Psoas muscle (tissue), 8 donors: ENCODE measurements at regions of chr15 and their contacts with region 1.

Region 1: DNA sequence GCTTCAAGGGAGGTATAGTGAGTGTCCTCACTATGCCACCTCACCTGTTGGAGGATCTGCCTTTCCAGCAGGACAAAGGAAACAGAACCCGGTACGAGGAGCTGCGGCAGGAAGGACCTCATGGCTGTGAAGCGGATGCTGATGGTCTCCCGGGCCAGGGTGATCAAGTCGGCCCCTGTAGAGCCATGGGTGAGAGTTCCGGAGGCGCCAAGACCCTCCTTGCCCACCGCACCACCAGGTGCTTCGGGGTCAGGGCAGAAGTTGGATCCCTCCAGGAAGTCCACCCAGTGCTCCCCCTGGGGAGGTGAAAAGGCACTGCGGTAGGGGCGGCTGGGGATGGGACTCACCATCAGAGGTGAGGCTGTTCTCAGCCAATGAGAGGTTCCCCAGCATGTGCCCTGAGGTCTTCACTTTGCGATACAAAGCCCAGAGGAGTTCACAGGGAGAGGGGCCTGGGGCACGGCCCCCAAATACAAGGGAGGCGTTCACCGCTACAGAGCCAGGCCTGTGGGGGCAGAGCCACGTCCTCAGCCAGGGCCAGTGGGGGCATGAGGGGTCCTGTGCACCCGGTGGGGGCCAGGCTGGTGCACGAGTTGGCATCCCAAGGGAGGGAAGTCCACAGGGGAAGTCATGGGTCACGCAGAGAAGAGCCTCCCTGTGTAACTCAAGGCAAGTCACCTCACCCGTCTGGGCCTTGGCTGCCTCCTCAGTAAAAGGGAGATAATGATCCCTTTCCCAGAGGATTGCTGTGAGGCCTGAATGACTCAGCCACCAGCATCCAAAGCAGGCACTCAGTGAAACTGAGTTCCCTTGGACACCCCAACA is 27.7 kb downstream of the C15orf39 start:
- DNase-seq: peak; percentile 11 to 35
- ATAC-seq: no peak
- H3K4me3 ChIP-seq: no peak overlapping the region
- H3K27ac ChIP-seq: no peak overlapping the region
- H3K4me1 ChIP-seq: no peaks in the 10 kb centered on the region
- H3K27me3 ChIP-seq: peaks cover 0 to 6% (median 0%) of the 10 kb centered on the region in 3 donors
- CTCF ChIP-seq: no peak

Region 2: GRCh38 chr15:74889883-74890664 is 339.3 kb before region 1 on chr15 and contains the start of gene MPI:
- intact Hi-C with region 1: no loop called
- DNase-seq: peak; percentile 86 to 91
- ATAC-seq: peak; percentile 94 to 98 (median 95)
- H3K4me3 ChIP-seq: peak within 1 kb of the TSS; percentile 95
- H3K27ac ChIP-seq: peak within 1 kb of the TSS; percentile 90
- H3K4me1 ChIP-seq: peaks cover 18% of the 10 kb centered on the region
- H3K27me3 ChIP-seq: no peaks in the 10 kb centered on the region
- CTCF ChIP-seq: peak; percentile 6
- total RNA-seq, gene MPI: 37.6 to 61.2 (median 43.2) TPM

Region 3: GRCh38 chr15:74928771-74929198 is 300.6 kb before region 1 on chr15:
- intact Hi-C with region 1: no loop called
- DNase-seq: no peak
- ATAC-seq: no peak
- H3K4me3 ChIP-seq: no peak overlapping the region
- H3K27ac ChIP-seq: no peak overlapping the region
- H3K4me1 ChIP-seq: peaks cover 7% of the 10 kb centered on the region
- H3K27me3 ChIP-seq: no peaks in the 10 kb centered on the region
- CTCF ChIP-seq: no peak

Region 4: GRCh38 chr15:75178171-75179075 is 51.0 kb before region 1 on chr15:
- intact Hi-C with region 1: no loop called
- DNase-seq: peak; percentile 44 to 70
- ATAC-seq: peak; percentile 17 to 62 (median 44)
- H3K4me3 ChIP-seq: peak overlapping the region; percentile 62
- H3K27ac ChIP-seq: peak overlapping the region; percentile 5
- H3K4me1 ChIP-seq: peaks cover 12% of the 10 kb centered on the region
- H3K27me3 ChIP-seq: peaks cover 0 to 31% (median 2%) of the 10 kb centered on the region in 3 donors
- CTCF ChIP-seq: no peak

Region 5: GRCh38 chr15:75307778-75308391 is 78.5 kb after region 1 on chr15:
- intact Hi-C with region 1: loop called in 1 of 2 experiments (anchors 10 kb)
- DNase-seq: no peak
- ATAC-seq: peak in 2 of 4 donors; percentile 30 to 42
- H3K4me3 ChIP-seq: no peak overlapping the region
- H3K27ac ChIP-seq: no peak overlapping the region
- H3K4me1 ChIP-seq: no peaks in the 10 kb centered on the region
- H3K27me3 ChIP-seq: peaks cover 4 to 38% (median 6%) of the 10 kb centered on the region in 3 donors
- CTCF ChIP-seq: peak; percentile 12

Region 6: GRCh38 chr15:75314552-75315290 is 85.3 kb after region 1 on chr15:
- intact Hi-C with region 1: loop called (anchors 5 to 10 kb)
- DNase-seq: no peak
- ATAC-seq: no peak
- H3K4me3 ChIP-seq: no peak overlapping the region
- H3K27ac ChIP-seq: no peak overlapping the region
- H3K4me1 ChIP-seq: no peaks in the 10 kb centered on the region
- H3K27me3 ChIP-seq: peaks cover 0 to 2% (median 0%) of the 10 kb centered on the region in 3 donors
- CTCF ChIP-seq: no peak

Region 7: GRCh38 chr15:75339531-75340240 is 110.3 kb after region 1 on chr15:
- intact Hi-C with region 1: no loop called
- DNase-seq: no peak
- ATAC-seq: no peak
- H3K4me3 ChIP-seq: no peak overlapping the region
- H3K27ac ChIP-seq: no peak overlapping the region
- H3K4me1 ChIP-seq: peaks cover 12% of the 10 kb centered on the region
- H3K27me3 ChIP-seq: no peaks in the 10 kb centered on the region
- CTCF ChIP-seq: no peak